H1 (cell line): ENCODE measurements at regions of chr16 and their contacts with region 1.

Region 1: DNA sequence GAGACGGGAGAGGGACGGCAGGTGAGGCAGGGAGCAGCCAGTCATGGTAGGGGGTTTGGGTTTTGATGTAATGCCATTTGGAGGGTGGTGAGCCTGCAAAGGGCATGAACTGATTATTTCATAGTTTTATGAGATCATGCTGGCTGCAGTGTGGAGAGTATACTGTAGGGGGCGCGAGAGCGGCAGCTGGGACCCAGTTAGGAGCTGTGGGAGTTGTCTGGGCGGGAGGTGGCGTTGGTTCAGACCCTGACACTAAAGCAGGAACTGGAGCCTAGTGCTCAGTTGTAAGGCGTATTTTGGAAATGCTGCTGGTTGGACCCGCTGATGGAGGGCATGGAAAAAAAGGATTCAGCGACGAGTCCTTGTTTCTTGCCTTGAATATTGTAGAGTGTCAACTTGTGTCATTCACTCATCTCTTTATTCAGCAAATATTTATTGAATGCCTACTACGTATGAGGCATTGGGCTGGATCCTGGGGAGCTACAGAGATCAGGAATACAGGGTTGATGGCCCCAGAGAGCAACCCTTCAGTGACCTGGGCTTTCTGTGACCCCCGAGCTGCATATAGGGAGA is 23.7 kb upstream of the KDM8 start:
- DNase-seq: peak; percentile 50 to 96
- H3K4me3 ChIP-seq: no peak overlapping the region
- H3K27ac ChIP-seq: no peak overlapping the region
- H3K4me1 ChIP-seq: peaks cover 0 to 3% (median 0%) of the 10 kb centered on the region in 4 experiments; a peak in 3 of 7 replicates
- H3K27me3 ChIP-seq: no peaks in the 10 kb centered on the region
- CTCF ChIP-seq: peak; percentile 86 to 98 (median 95)
- EP300 ChIP-seq: no peak
- POLR2A ChIP-seq: no peak
- RAD21 ChIP-seq: peak; percentile 81 to 86

Region 2: GRCh38 chr16:27154705-27155521 is 24.7 kb before region 1 on chr16:
- CTCF ChIA-PET with region 1: interaction called, 19 read pairs
- POLR2A ChIA-PET with region 1: interaction called, 3 read pairs
- DNase-seq: peak; percentile 41 to 95
- H3K4me3 ChIP-seq: peak overlapping the region in 1 of 4 experiments; percentile 49; a peak in 2 of 8 replicates
- H3K27ac ChIP-seq: no peak overlapping the region
- H3K4me1 ChIP-seq: no peaks in the 10 kb centered on the region
- H3K27me3 ChIP-seq: no peaks in the 10 kb centered on the region
- CTCF ChIP-seq: peak; percentile 83 to 96 (median 96)
- EP300 ChIP-seq: peak in 1 of 2 experiments; percentile 62; a peak in 1 of 3 replicates
- POLR2A ChIP-seq: no peak
- RAD21 ChIP-seq: peak; percentile 69 to 77

Region 3: DNA sequence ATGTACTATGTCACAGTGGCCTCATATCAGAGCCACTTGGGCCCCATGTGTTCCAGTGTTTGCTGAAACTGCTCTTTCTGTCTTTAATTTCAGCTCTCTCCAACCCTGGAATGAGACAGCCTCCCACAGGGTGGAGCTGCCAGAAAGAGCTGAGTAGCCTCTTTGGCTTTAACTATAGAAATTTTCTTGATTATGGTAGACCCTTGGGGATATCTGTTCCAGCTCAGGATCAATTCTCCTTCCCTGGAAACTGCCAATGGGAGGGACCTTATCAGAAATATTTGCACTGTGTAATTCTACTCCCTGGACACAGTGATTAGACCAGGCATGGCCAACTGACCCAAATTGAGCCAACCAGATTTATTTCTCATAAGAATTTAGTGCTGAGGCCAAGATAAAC is 15.2 kb before region 1 on chr16:
- CTCF ChIA-PET with region 1: interaction called, 41 read pairs
- POLR2A ChIA-PET with region 1: interaction called, 3 read pairs
- DNase-seq: no peak
- H3K4me3 ChIP-seq: no peak overlapping the region
- H3K27ac ChIP-seq: no peak overlapping the region
- H3K4me1 ChIP-seq: no peaks in the 10 kb centered on the region
- H3K27me3 ChIP-seq: no peaks in the 10 kb centered on the region; a peak in 1 of 7 replicates
- CTCF ChIP-seq: no peak
- EP300 ChIP-seq: no peak
- POLR2A ChIP-seq: no peak
- RAD21 ChIP-seq: no peak

Region 4: GRCh38 chr16:27203429-27204231 is 24.0 kb after region 1 on chr16 and contains the start of gene KDM8:
- CTCF ChIA-PET with region 1: interaction called, 10 read pairs
- POLR2A ChIA-PET with region 1: interaction called, 5 read pairs
- DNase-seq: peak; percentile 94 to 98
- H3K4me3 ChIP-seq: peak within 1 kb of the TSS; percentile 68 to 92 (median 82)
- H3K27ac ChIP-seq: peak within 1 kb of the TSS; percentile 96
- H3K4me1 ChIP-seq: peaks cover 0 to 4% (median 3%) of the 10 kb centered on the region in 4 experiments; a peak in 3 of 7 replicates
- H3K27me3 ChIP-seq: no peaks in the 10 kb centered on the region
- CTCF ChIP-seq: no peak
- EP300 ChIP-seq: no peak
- POLR2A ChIP-seq: peak; percentile 96 to 98
- RAD21 ChIP-seq: no peak
- total RNA-seq, gene KDM8: 10.3 and 14.6 TPM in 2 replicates

Region 5: DNA sequence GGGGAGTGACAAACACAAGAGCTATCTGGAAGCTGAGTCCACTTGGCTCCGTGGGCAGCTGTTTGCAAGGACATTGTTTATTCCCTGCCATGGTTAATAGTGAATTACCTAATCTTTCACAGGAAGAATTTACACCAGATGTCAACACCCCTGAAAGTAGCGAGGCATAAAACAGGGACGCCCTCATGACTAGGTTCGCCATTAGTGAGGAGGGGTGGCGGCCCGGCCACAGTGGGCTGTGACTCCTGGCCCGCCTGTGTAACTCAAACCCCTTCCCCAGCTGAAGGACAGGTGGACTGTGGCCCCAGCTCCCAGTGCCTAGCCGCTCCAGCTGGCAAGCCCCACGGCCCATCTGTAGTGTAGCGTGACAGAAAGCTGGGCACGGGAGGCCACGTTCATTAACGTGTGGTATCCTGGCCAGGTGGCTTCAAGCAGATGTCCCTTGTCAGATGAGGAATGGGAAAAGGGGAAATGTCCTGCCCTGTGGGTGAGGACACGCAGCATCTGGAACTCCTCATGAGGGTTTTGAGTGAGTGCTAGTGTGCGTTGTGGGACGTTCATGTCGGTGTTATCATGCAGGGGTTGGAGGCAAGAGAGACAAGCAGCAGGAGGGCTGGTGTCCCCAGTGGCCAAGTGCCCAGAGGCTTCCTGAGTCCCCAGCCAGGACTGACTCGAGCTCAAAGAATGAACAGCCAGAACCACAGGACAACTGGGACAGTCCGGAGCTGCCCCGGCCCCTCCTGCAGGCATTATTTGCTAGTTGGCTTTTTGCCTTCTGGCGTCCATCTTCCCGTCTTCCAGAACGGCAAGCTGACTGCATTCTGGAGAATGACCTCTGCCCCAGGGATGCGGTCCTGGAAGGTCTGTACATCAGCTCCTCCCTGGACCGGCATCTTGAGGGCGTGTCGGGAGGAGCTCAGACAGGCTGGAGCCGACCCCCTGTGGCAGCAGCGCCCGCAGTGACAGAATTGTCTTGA is 43.0 kb after region 1 on chr16:
- CTCF ChIA-PET with region 1: interaction called, 17 read pairs
- POLR2A ChIA-PET with region 1: no interaction called
- DNase-seq: no peak
- H3K4me3 ChIP-seq: no peak overlapping the region
- H3K27ac ChIP-seq: no peak overlapping the region
- H3K4me1 ChIP-seq: 0 out of 7 replicates have a peak, but pooled peaks cover 0 to 2% (median 0%) of the 10 kb centered on the region in 4 experiments
- H3K27me3 ChIP-seq: no peaks in the 10 kb centered on the region
- CTCF ChIP-seq: no peak
- EP300 ChIP-seq: no peak
- POLR2A ChIP-seq: no peak
- RAD21 ChIP-seq: no peak

Region 6: DNA sequence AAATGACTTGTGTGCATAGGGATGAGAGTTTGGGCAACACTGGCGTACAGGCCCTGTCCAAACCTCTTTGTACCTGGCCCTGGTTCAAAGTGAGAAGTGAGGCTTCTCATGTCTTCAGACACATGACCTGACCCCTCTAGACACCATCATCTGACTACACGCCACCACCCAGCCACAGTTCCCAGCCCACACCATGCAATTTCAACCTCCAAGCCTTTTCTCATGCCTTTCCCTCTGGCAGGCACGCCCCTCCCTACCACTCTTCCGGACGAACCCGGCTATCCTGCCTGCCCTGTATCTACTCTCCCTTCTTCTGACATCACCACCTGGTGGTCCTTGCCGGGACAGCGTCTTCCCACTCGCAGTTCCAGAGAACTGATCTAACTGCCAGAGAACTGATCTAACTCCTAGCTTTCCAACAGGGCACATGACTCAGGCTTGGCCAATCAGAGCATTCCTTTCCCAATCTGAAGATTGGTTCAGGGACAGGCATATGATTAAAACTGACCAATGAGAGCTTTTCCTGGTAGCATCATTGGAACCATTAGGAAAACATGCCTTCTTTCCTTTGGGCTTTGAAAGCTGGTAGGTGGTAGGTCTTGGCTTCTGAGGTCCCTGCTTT is 195.3 kb after region 1 on chr16:
- CTCF ChIA-PET with region 1: interaction called, 50 read pairs
- POLR2A ChIA-PET with region 1: no interaction called
- DNase-seq: peak; percentile 87 to 93
- H3K4me3 ChIP-seq: no peak overlapping the region
- H3K27ac ChIP-seq: no peak overlapping the region
- H3K4me1 ChIP-seq: peaks cover 0 to 2% (median 0%) of the 10 kb centered on the region in 4 experiments; a peak in 3 of 7 replicates
- H3K27me3 ChIP-seq: no peaks in the 10 kb centered on the region
- CTCF ChIP-seq: peak; percentile 64 to 86 (median 79)
- EP300 ChIP-seq: no peak
- POLR2A ChIP-seq: no peak
- RAD21 ChIP-seq: peak; percentile 63 to 73